CD4-positive, alpha-beta memory T cell (primary cell): ENCODE measurements at regions of chr1 and their contacts with region 1.

Region 1: GRCh38 chr1:241611063-241611462 is 29.1 kb downstream of the CHML start:
- DNase-seq: peak in 4 of 5 donors; percentile 56 to 62 (median 60)
- H3K4me3 ChIP-seq: no peak overlapping the region
- H3K4me3 Mint-ChIP-seq: no peak overlapping the region
- H3K27ac ChIP-seq: no peak overlapping the region
- H3K27ac Mint-ChIP-seq: no peak overlapping the region
- H3K4me1 ChIP-seq: no peaks in the 10 kb centered on the region
- H3K4me1 Mint-ChIP-seq: no peaks in the 10 kb centered on the region
- H3K27me3 ChIP-seq: no peaks in the 10 kb centered on the region
- H3K27me3 Mint-ChIP-seq: no peaks in the 10 kb centered on the region

Region 2: DNA sequence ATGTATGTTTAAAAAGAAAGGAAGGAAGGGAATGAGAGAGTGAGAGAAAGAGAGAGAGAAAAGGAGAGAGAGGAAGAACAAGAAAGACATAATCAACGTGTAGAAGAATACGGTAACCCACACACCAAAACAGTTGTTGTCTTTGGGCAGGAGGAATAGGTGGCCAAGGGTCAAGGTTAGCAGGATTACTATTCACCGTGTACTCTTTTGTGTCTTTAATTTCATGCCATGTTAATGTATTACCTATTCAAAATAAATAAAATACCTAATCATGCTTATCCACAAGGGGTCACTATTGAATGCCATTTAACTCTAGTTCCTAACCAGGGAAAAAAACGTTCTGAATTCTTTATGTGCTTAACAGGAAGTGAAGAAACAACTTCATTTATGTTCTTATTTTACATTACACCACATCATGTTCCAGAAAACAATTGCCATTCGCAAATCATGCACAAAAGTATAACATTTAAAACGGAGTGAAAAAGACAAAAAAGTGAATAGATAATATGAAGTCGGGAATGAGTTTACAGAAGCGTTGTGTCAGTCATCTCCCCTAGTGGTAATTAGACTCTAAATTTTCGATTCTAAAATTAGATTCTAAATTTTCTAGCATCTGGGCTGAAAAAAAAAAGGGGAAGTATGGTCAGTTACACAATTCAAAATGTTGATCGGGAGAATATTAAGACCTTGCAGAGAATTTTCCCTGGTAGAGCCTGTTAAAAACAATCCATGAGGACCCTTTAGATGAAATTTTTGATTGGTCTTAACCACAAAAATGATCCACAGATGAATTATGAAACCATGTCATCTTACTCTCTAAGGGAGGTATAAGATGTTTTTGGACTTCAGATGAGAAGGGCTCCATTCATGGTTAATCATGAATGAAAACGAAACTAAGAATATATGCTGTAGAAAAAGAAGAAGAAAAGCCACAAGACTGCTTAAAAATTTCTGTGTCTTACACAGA is 79.6 kb before region 1 on chr1:
- CTCF ChIA-PET with region 1: interaction called, 3 read pairs
- POLR2A ChIA-PET with region 1: no interaction called
- intact Hi-C with region 1: loop called (anchors 1 kb)
- DNase-seq: peak in 4 of 5 donors; percentile 65 to 70 (median 68)
- H3K4me3 ChIP-seq: peak overlapping the region; percentile 45 to 52
- H3K4me3 Mint-ChIP-seq: peak overlapping the region; percentile 91 to 99 (median 98)
- H3K27ac ChIP-seq: peak overlapping the region; percentile 10
- H3K27ac Mint-ChIP-seq: peak overlapping the region in 6 of 7 donors; percentile 1 to 94 (median 90)
- H3K4me1 ChIP-seq: peaks cover 5% of the 10 kb centered on the region
- H3K4me1 Mint-ChIP-seq: peaks cover 5 to 11% (median 9%) of the 10 kb centered on the region in 4 donors
- H3K27me3 ChIP-seq: no peaks in the 10 kb centered on the region
- H3K27me3 Mint-ChIP-seq: peaks cover 0 to 1% of the 10 kb centered on the region in 2 donors

Region 3: GRCh38 chr1:241592273-241592958 is 18.6 kb before region 1 on chr1:
- CTCF ChIA-PET with region 1: interaction called, 10 read pairs
- POLR2A ChIA-PET with region 1: no interaction called
- intact Hi-C with region 1: no loop called
- DNase-seq: no peak
- H3K4me3 ChIP-seq: no peak overlapping the region
- H3K4me3 Mint-ChIP-seq: no peak overlapping the region
- H3K27ac ChIP-seq: no peak overlapping the region
- H3K27ac Mint-ChIP-seq: no peak overlapping the region
- H3K4me1 ChIP-seq: no peaks in the 10 kb centered on the region
- H3K4me1 Mint-ChIP-seq: no peaks in the 10 kb centered on the region
- H3K27me3 ChIP-seq: no peaks in the 10 kb centered on the region
- H3K27me3 Mint-ChIP-seq: peaks cover 0 to 3% of the 10 kb centered on the region in 2 donors

Region 4: GRCh38 chr1:241640029-241640818 is 29.2 kb after region 1 on chr1 and contains the starts of genes CHML and OPN3:
- CTCF ChIA-PET with region 1: interaction called, 10 read pairs
- POLR2A ChIA-PET with region 1: interaction called, 3 read pairs
- intact Hi-C with region 1: no loop called
- DNase-seq: peak; percentile 83 to 87 (median 84)
- H3K4me3 ChIP-seq: peak within 1 kb of the TSS; percentile 64 to 82
- H3K4me3 Mint-ChIP-seq: peak within 1 kb of the TSS; percentile 81 to 89 (median 86)
- H3K27ac ChIP-seq: peak within 1 kb of the TSS; percentile 41
- H3K27ac Mint-ChIP-seq: peak within 1 kb of the TSS; percentile 60 to 96 (median 85)
- H3K4me1 ChIP-seq: peaks cover 25% of the 10 kb centered on the region
- H3K4me1 Mint-ChIP-seq: peaks cover 18 to 40% (median 25%) of the 10 kb centered on the region in 4 donors
- H3K27me3 ChIP-seq: no peaks in the 10 kb centered on the region
- H3K27me3 Mint-ChIP-seq: no peaks in the 10 kb centered on the region
- total RNA-seq, gene CHML: 7.5 to 8.8 TPM
- total RNA-seq, gene OPN3: 3.9 to 4.8 TPM

Region 5: DNA sequence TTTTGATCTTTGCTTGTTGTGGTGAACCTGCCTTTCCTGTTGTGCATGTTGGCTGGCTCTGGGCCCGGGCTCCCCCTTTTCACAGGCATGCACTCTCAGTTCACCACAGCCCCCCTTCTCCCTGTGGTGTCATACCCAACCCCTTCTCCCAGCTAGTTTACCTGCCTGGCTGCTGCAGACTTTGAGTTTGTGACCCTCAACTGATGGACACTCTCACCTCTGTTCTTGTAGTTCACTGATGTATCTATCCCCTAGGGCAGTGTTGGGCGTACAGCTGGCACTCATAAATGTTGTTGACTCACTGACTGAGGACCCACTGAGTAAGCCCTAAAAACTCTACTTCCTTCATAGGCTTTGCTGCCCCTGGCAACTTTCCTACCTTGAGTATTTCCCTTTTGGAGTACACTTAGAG is 95.9 kb after region 1 on chr1:
- CTCF ChIA-PET with region 1: no interaction called
- POLR2A ChIA-PET with region 1: no interaction called
- intact Hi-C with region 1: no loop called
- DNase-seq: peak in 4 of 5 donors; percentile 25 to 29 (median 26)
- H3K4me3 ChIP-seq: no peak overlapping the region
- H3K4me3 Mint-ChIP-seq: peak overlapping the region; percentile 2 to 81 (median 19)
- H3K27ac ChIP-seq: no peak overlapping the region
- H3K27ac Mint-ChIP-seq: peak overlapping the region in 4 of 7 donors; percentile 3 to 82 (median 41)
- H3K4me1 ChIP-seq: peaks cover 15% of the 10 kb centered on the region
- H3K4me1 Mint-ChIP-seq: peaks cover 9 to 16% (median 13%) of the 10 kb centered on the region in 4 donors
- H3K27me3 ChIP-seq: no peaks in the 10 kb centered on the region
- H3K27me3 Mint-ChIP-seq: peaks cover 2 to 5% of the 10 kb centered on the region in 2 donors

Region 6: GRCh38 chr1:241847796-241848685 is 237.0 kb after region 1 on chr1 and contains the start of gene EXO1:
- CTCF ChIA-PET with region 1: interaction called, 14 read pairs
- POLR2A ChIA-PET with region 1: no interaction called
- intact Hi-C with region 1: loop called (anchors 2 kb)
- DNase-seq: peak; percentile 90 to 93 (median 92)
- H3K4me3 ChIP-seq: peak within 1 kb of the TSS; percentile 80 to 98
- H3K4me3 Mint-ChIP-seq: peak within 1 kb of the TSS; percentile 95 to 99 (median 98)
- H3K27ac ChIP-seq: peak within 1 kb of the TSS; percentile 85
- H3K27ac Mint-ChIP-seq: peak within 1 kb of the TSS; percentile 98 to 100 (median 99)
- H3K4me1 ChIP-seq: peaks cover 14% of the 10 kb centered on the region
- H3K4me1 Mint-ChIP-seq: peaks cover 13 to 20% (median 15%) of the 10 kb centered on the region in 4 donors
- H3K27me3 ChIP-seq: no peaks in the 10 kb centered on the region
- H3K27me3 Mint-ChIP-seq: no peaks in the 10 kb centered on the region
- total RNA-seq, gene EXO1: 0.41 to 0.44 TPM

Region 7: DNA sequence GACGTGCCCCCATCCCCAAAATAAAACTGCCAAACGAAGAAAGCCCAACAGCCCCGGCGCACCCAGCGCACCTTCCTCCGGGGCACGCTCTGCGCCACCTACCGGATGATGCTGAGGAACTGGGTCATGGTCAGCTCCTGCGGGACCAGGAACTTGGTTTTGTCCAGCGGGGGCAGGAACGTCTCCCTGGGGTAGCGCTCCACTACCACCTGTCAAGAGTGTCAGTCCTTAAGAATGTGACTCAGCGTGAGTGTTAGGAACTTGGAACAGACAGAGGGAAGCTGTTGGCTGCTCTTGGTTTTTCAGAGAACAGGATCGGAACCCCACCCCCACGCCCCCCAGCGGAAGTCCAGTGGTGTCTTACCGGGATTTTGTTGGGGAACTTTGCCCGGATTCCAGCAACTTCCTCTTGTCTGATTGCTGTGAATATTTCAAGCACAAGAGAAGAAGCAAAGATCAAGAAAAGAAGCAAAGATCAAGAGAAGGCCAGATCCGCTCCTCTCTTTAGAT is 387.4 kb after region 1 on chr1:
- CTCF ChIA-PET with region 1: interaction called, 61 read pairs
- POLR2A ChIA-PET with region 1: no interaction called
- intact Hi-C with region 1: loop called (anchors 1 kb)
- DNase-seq: peak in 4 of 5 donors; percentile 29 to 47 (median 34)
- H3K4me3 ChIP-seq: no peak overlapping the region
- H3K4me3 Mint-ChIP-seq: peak overlapping the region in 7 of 8 donors; percentile 55 to 80 (median 67)
- H3K27ac ChIP-seq: no peak overlapping the region
- H3K27ac Mint-ChIP-seq: peak overlapping the region in 1 of 7 donors; percentile 66
- H3K4me1 ChIP-seq: no peaks in the 10 kb centered on the region
- H3K4me1 Mint-ChIP-seq: peaks cover 0 to 7% (median 1%) of the 10 kb centered on the region in 4 donors
- H3K27me3 ChIP-seq: no peaks in the 10 kb centered on the region
- H3K27me3 Mint-ChIP-seq: peaks cover 2 to 3% of the 10 kb centered on the region in 2 donors